ENCODE measurements at regions of chr3 and their contacts with region 1.

Region 1: GRCh38 chr3:187738331-187739093 is 6.8 kb downstream of the BCL6 start:
- DNase-seq: peak; percentile 86 to 91
- ATAC-seq: peak; percentile 67

Region 2: GRCh38 chr3:189148081-189148507 is 1409.6 kb after region 1 on chr3:
- intact Hi-C with region 1: loop called in 1 of 2 experiments (anchors 10 kb)
- DNase-seq: peak; percentile 43 to 66
- ATAC-seq: peak; percentile 77

Measured in left colon (tissue), 2 donors.